Naive thymus-derived CD8-positive, alpha-beta T cell (primary cell): ENCODE measurements at regions of chr3 and their contacts with region 1.

Region 1: DNA sequence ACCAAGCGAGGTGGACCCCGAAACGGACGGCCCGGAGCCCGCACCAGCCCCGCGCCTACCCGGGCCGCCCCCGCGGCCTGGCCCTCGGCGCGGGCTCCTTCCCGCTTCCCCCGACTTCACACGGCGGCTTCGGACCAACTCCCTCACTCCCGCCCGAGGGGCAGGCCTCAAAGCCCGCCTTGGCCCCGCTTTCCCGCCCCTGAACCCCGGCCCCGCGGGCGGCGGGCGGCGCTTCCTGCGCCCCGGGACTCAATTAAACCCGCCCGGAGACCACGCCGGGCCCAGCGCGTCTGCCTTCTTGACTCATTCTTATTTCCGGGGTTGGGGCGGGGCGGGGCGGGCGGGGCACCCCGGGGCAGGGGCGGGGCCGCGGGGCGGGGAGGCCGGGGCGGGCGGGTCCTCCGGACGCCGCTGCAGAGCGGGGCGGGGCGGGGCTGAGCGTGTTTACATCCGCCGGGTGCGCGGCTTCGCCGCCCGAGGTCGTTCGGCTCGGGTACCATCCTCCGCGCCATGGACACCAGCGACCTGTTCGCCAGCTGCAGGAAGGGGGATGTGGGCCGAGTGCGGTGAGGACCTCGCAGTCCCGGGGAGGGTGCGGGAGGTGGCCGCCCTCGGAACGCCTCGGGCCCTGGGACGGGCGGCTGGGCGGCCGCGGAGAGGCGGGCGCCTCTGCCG is at the start of gene ABTB1:
- DNase-seq: peak; percentile 76 to 92 (median 85)
- ATAC-seq: peak; percentile 80 to 83
- H3K4me3 Mint-ChIP-seq: peak within 1 kb of the TSS; percentile 84 to 98 (median 94)
- H3K27ac Mint-ChIP-seq: peak within 1 kb of the TSS; percentile 94 to 99 (median 98)
- H3K4me1 Mint-ChIP-seq: peaks cover 27 to 52% (median 35%) of the 10 kb centered on the region in 4 donors
- H3K27me3 Mint-ChIP-seq: no peaks in the 10 kb centered on the region
- polyA plus RNA-seq, gene ABTB1: 58.6 to 71.9 (median 60.9) TPM

Region 2: DNA sequence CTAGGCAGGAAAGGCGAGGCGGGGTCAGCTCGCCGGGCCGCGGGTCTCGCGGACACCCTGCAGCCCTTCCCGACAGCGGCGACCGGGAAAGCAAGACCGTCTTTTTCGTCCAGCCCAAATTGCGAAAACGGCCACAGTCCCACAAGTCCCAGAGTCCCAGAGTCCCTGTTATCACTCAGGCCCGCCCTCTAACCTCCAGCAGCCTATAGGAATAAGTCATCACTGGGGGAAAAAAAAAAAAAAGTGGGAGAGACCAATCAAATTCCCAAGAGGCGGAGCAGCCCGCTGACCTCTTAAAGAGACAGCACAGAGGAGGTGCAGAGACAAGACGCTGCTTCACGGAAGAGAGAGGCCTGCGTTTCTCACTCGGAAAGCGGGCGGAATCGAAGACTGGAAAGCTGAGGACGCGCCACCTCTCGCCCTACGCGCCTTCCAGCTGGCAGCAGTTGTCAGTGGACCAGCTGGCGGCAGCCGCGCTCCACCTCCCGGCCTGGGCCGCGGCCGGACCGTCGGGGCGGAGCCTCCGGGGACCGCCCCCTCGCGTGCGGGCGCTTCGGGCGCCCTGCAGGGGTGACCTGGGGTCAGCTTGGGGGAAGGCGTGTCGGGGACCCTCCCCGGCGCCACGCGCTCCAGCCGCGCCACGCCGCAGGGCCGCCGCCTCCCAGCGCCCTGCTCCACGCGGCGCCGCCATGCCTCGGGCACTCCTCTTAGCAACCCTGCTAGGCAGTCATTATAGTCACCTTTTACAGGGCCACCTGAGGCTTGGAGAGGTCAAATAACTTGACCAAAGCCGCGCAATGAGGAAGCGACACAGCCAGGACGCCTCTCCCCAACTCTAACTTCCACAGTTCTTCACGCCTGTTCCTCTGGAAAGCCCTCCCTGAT is 81.8 kb before region 1 on chr3 and contains the start of gene TPRA1:
- POLR2A ChIA-PET with region 1: interaction called, 21 read pairs
- DNase-seq: peak; percentile 55 to 92 (median 78)
- ATAC-seq: peak; percentile 87 to 88
- H3K4me3 Mint-ChIP-seq: peak within 1 kb of the TSS; percentile 94 to 100 (median 97)
- H3K27ac Mint-ChIP-seq: peak within 1 kb of the TSS; percentile 94 to 99 (median 98)
- H3K4me1 Mint-ChIP-seq: peaks cover 21 to 47% (median 37%) of the 10 kb centered on the region in 4 donors
- H3K27me3 Mint-ChIP-seq: no peaks in the 10 kb centered on the region
- polyA plus RNA-seq, gene TPRA1: 14.8 to 27.6 (median 15.3) TPM

Region 3: DNA sequence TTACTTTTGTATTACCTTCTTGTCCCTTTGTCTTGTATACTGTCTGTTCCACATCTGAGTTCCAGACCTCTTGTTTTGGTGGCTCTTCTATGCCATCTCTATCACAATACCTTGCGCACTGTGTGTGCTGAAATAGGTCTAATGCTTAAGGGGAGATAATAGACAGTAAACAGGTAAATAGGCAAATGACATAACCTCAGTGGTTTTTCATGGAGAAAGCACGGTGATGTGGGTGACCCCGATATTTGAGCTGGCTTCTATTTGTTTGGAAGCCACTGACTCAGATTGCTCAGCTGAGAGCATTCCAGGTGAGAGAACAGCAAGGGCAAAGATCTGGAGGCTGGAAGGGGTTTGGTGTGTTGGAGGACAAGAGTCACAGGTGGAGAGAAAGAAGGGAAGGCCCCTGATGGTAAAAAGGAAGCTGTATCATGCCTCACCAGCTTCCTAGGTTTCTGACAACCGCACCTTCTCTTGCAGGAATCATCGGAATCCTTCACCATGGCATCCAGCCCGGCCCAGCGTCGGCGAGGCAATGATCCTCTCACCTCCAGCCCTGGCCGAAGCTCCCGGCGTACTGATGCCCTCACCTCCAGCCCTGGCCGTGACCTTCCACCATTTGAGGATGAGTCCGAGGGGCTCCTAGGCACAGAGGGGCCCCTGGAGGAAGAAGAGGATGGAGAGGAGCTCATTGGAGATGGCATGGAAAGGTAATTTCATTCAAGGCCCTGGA is 73.6 kb before region 1 on chr3:
- POLR2A ChIA-PET with region 1: interaction called, 21 read pairs
- DNase-seq: no peak
- ATAC-seq: no peak
- H3K4me3 Mint-ChIP-seq: peak overlapping the region; percentile 70 to 91 (median 84)
- H3K27ac Mint-ChIP-seq: peak overlapping the region; percentile 78 to 95 (median 88)
- H3K4me1 Mint-ChIP-seq: peaks cover 13 to 28% (median 18%) of the 10 kb centered on the region in 4 donors
- H3K27me3 Mint-ChIP-seq: no peaks in the 10 kb centered on the region